ENCODE measurements at regions of chr14 and their contacts with region 1.

Region 1: DNA sequence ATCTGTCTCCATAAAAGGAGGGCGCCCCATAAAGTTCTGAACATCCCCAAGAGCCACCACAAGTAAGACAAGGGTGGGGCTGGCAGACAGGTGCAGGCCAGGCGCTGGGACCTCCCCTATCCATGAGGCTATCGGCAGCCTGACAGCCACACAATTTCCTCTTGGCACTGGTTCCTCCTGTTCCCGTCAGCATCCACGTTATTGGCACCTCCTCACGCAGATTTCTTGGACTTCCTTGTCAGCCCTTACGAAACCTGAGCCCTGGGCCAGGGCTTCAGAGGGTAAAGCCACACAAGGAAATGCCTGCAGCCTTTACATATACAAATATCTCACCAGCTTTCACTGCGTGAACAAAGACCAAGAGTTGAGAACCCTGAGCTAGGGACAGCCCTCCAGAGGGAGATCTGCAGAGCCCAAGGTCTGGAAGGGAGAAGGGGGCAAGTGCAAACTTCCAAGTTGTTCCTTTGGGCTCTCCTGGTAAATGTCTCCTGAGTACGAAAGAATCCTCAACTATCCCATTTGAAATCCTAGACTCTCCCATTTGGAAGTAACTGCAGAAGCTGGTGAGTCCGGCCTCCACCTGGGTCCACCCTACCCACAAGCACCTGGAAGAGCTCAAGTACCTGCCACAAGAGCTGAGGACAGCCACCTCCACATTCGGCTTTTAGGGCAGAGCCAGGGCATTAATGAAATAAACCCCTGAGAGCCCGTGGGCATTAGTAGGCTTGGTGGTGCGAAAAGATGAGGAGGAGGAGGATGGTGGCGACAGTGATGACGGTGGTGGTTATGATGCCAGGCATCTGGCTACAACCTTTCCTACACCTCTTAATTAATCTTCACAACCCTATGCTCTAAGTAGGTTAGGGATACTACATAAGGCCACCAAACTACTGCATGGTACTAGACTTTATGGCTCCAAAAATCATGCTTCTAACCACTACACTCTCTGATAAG is 5.5 kb upstream of the TC2N start:
- DNase-seq: no peak
- H3K4me3 Mint-ChIP-seq: peak overlapping the region; percentile 75
- H3K27ac Mint-ChIP-seq: peak overlapping the region; percentile 92
- H3K4me1 Mint-ChIP-seq: peaks cover 97% of the 10 kb centered on the region
- H3K27me3 Mint-ChIP-seq: peaks cover 2% of the 10 kb centered on the region

Region 2: DNA sequence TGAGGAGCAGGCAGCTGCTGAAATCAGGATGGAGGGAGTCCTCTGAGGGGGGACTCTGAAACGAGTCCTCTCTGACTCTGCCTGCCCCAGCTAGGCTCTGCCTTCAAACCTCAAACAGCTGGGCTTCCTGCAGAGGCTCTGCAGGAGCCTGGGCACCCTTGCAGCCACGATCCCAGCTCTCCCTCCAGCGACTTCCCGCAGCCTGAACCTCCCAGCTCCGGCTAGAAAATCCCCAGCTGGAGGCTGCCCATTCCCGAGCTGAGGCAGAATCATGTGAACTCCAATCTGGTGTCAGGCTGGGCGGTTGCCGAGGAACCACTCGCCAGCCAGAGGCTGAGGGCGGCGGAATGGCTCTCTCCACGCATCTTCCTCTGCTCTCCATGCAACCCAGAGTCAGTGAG is 628.3 kb before region 1 on chr14 and contains the start of gene GPR68:
- intact Hi-C with region 1: loop called (anchors 5 kb)
- DNase-seq: no peak
- H3K4me3 Mint-ChIP-seq: peak within 1 kb of the TSS; percentile 85
- H3K27ac Mint-ChIP-seq: peak within 1 kb of the TSS; percentile 88
- H3K4me1 Mint-ChIP-seq: peaks cover 89% of the 10 kb centered on the region
- H3K27me3 Mint-ChIP-seq: no peaks in the 10 kb centered on the region
- total RNA-seq, gene GPR68: 4.5 and 5.4 TPM in 2 replicates

Region 3: DNA sequence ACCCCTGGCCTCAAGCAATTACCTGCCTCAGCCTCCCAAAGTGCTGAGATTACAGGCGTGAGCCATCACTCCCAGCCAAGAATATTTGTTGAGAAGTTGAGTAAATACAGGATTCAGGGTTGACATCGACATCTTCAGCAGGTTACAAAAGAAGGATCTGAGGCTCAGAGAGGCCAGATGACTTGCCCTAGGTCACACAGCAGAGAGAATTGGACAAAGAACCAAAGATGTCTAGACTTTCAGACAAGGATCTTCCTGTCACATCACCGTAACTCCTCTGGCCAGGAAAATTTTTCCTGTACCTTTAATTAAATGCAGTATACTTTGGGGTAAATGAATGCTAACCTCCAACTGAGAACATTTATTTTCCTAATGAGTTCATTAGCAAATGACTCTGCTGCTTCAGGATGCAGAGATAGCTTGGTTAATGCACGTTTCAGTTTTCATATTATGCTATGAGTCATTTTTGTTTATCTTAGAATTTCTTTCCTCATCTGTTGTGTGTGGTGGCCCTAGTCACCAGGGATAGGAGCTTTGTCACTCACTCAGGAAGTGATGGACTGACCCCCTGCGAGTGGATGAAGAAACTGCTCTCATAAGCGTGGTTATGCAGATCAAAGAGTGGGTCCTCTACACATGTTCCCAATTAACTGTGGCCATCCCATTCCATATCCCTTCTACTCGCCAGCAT is 14.4 kb before region 1 on chr14:
- intact Hi-C with region 1: loop called (anchors 1 kb)
- DNase-seq: no peak
- H3K4me3 Mint-ChIP-seq: peak overlapping the region; percentile 10
- H3K27ac Mint-ChIP-seq: peak overlapping the region; percentile 65
- H3K4me1 Mint-ChIP-seq: peaks cover 77% of the 10 kb centered on the region
- H3K27me3 Mint-ChIP-seq: no peaks in the 10 kb centered on the region

Region 4: GRCh38 chr14:91893007-91893406 is 20.2 kb after region 1 on chr14:
- intact Hi-C with region 1: loop called (anchors 2 kb)
- DNase-seq: no peak
- H3K4me3 Mint-ChIP-seq: no peak overlapping the region
- H3K27ac Mint-ChIP-seq: no peak overlapping the region
- H3K4me1 Mint-ChIP-seq: peaks cover 34% of the 10 kb centered on the region
- H3K27me3 Mint-ChIP-seq: no peaks in the 10 kb centered on the region

Region 5: GRCh38 chr14:91980127-91980741 is 107.4 kb after region 1 on chr14:
- intact Hi-C with region 1: loop called (anchors 1 kb)
- DNase-seq: no peak
- H3K4me3 Mint-ChIP-seq: no peak overlapping the region
- H3K27ac Mint-ChIP-seq: peak overlapping the region; percentile 42
- H3K4me1 Mint-ChIP-seq: peaks cover 28% of the 10 kb centered on the region
- H3K27me3 Mint-ChIP-seq: no peaks in the 10 kb centered on the region

Region 6: GRCh38 chr14:92106143-92106926 is 233.5 kb after region 1 on chr14 and contains the start of gene ATXN3:
- intact Hi-C with region 1: loop called (anchors 5 kb)
- DNase-seq: peak; percentile 93
- H3K4me3 Mint-ChIP-seq: peak within 1 kb of the TSS; percentile 99
- H3K27ac Mint-ChIP-seq: peak within 1 kb of the TSS; percentile 97
- H3K4me1 Mint-ChIP-seq: peaks cover 42% of the 10 kb centered on the region
- H3K27me3 Mint-ChIP-seq: no peaks in the 10 kb centered on the region
- total RNA-seq, gene ATXN3: 27.3 and 27.5 TPM in 2 replicates